IMR-90 (cell line): ENCODE measurements at regions of chr13 and their contacts with region 1.

Region 1: GRCh38 chr13:76991796-76992547 is at the start of gene CLN5:
- DNase-seq: peak; percentile 90
- ATAC-seq: peak; percentile 99
- H3K4me3 ChIP-seq: peak within 1 kb of the TSS; percentile 83
- H3K27ac ChIP-seq: peak within 1 kb of the TSS; percentile 60
- H3K4me1 ChIP-seq: peaks cover 4% of the 10 kb centered on the region; the same call in 1 of the 2 replicates
- H3K27me3 ChIP-seq: peaks cover 3% of the 10 kb centered on the region
- CTCF ChIP-seq: no peak
- POLR2A ChIP-seq: peak; percentile 92
- RAD21 ChIP-seq: no peak
- total RNA-seq, gene CLN5: 15.1 and 22.8 TPM in 2 replicates

Region 2: DNA sequence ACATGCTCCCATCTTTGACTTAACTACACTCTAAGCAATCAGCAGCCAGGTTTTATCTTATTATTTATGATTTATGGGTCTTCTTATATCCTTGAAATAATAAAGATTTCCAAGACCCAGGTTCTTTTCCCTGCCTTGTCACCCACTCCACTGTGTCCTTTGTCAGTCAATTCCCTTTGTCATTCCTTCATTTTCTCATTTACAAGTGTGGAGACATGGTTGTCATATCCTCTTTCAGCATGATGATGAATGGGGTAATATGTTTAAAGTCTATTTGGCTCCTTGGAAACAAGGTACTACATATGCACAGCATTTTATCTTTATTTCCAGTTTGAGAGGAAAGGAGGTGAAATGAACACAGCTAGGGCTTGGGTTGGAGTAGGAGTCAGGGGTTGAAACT is 834.0 kb before region 1 on chr13:
- CTCF ChIA-PET with region 1: no interaction called
- POLR2A ChIA-PET with region 1: no interaction called
- dilution Hi-C with region 1: no loop called
- in situ Hi-C with region 1: no loop called
- intact Hi-C with region 1: loop called (anchors 5 kb)
- DNase-seq: no peak
- ATAC-seq: no peak
- H3K4me3 ChIP-seq: no peak overlapping the region
- H3K27ac ChIP-seq: no peak overlapping the region
- H3K4me1 ChIP-seq: no peaks in the 10 kb centered on the region; the same call in 1 of the 2 replicates
- H3K27me3 ChIP-seq: no peaks in the 10 kb centered on the region
- CTCF ChIP-seq: no peak
- POLR2A ChIP-seq: no peak
- RAD21 ChIP-seq: no peak

Region 3: GRCh38 chr13:76980075-76980718 is 11.8 kb before region 1 on chr13:
- CTCF ChIA-PET with region 1: interaction called, 14 read pairs
- POLR2A ChIA-PET with region 1: no interaction called
- dilution Hi-C with region 1: no loop called
- in situ Hi-C with region 1: no loop called
- intact Hi-C with region 1: no loop called
- DNase-seq: peak; percentile 24
- ATAC-seq: peak; percentile 100
- H3K4me3 ChIP-seq: peak overlapping the region; percentile 44
- H3K27ac ChIP-seq: no peak overlapping the region
- H3K4me1 ChIP-seq: no peaks in the 10 kb centered on the region
- H3K27me3 ChIP-seq: peaks cover 24% of the 10 kb centered on the region
- CTCF ChIP-seq: peak; percentile 87
- POLR2A ChIP-seq: no peak
- RAD21 ChIP-seq: peak; percentile 66

Region 4: GRCh38 chr13:77002590-77003190 is 10.7 kb after region 1 on chr13:
- CTCF ChIA-PET with region 1: interaction called, 15 read pairs
- POLR2A ChIA-PET with region 1: no interaction called
- dilution Hi-C with region 1: no loop called
- in situ Hi-C with region 1: no loop called
- intact Hi-C with region 1: no loop called
- DNase-seq: peak; percentile 48
- ATAC-seq: peak; percentile 67
- H3K4me3 ChIP-seq: no peak overlapping the region
- H3K27ac ChIP-seq: no peak overlapping the region
- H3K4me1 ChIP-seq: no peaks in the 10 kb centered on the region
- H3K27me3 ChIP-seq: no peaks in the 10 kb centered on the region
- CTCF ChIP-seq: peak; percentile 67
- POLR2A ChIP-seq: no peak
- RAD21 ChIP-seq: peak; percentile 52